ENCODE measurements at regions of chr10 and their contacts with region 1.

Region 1: GRCh38 chr10:58952747-58953466 is 223.5 kb upstream of the PHYHIPL start:
- DNase-seq: no peak
- H3K4me3 ChIP-seq: no peak overlapping the region
- CTCF ChIP-seq: peak; percentile 63

Region 2: DNA sequence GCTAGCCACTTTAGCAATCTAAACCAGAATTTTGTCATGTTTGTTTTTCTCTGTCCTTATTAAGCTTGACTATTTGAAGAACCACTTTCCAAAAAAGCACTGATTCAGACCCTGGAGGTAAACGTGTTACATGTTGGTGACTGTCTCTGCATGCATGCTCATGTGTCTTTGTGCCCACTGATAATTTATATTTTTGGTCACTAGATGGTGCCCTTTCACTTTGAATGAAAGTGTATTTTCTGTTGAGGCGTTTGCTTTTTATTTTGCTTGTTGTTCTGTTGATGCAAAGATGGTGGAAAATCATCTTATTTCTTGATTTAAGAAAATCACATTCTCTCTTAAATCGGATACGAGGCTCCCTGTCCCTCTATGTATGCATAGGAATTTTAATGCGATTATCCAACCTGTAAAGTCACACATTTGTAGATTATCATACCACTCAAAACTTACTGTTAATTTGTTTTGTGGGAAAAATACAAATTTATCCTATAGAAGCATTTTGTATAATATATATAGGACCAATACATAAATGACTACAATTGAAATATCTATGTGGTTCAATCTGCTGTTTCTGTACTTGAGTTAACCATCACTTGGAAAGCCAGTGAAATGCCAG is 170.9 kb before region 1 on chr10:
- CTCF ChIA-PET with region 1: interaction called, 26 read pairs
- POLR2A ChIA-PET with region 1: no interaction called
- DNase-seq: no peak
- H3K4me3 ChIP-seq: no peak overlapping the region
- CTCF ChIP-seq: no peak

Region 3: DNA sequence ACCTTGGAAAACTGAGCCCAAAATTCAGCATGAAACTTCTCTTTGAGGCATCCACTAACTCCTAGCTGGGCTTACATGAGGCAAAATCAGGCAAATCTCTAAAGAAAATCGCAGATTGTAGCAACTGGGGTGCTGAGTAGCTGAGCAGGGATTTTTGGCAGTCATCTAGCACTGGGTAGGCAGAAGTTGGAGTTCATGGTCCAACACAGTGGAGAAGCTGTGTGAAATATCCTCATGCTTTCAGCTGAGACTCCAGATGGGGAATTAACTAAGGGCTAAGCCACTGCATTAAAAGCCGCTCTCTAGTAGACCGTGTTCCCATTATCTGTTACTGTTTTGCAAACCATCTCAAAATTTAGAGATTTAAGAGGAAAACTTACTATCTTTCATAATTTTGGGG is 16.5 kb before region 1 on chr10:
- CTCF ChIA-PET with region 1: interaction called, 21 read pairs
- POLR2A ChIA-PET with region 1: no interaction called
- DNase-seq: no peak
- H3K4me3 ChIP-seq: no peak overlapping the region
- CTCF ChIP-seq: no peak

Region 4: DNA sequence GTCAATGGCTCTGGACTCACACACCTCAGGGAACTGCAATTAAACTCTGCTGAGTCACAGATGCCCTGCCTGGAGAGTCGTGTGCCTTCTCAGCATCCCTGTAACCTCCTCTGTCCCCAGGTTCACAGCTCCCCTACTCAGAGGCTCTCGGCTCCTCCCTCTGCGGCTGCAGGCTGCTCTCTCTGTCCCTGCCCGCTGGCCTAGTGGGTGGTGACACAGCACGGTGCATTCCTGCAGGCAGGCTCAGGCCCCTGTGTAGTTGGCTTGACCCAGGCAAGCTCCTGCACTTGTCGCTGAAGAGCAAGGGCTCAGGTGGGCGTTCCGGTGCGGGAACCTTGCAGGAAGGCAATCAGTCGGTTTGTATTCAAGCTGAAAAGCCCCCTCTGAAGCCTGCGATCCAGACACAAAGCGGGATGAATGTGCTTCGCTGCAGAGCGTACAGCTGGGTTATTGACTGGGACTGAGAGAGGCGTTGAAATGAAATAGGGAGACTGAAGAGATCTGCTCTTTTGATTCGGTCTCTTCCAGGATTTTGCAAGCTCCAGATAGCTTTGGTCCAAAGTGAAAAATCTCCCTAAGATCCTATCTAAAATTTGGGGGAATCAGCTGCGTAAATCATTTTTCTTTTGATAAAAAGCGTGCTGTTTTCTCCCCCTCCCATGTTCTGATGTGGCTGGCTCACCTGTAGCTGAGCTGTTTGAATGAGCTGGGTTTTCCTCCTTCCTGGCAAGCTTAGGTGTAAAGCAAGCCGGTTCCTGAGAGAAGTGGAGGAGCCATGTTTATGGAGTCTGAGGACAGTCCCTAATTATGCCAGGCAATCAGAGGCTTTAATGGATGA is 14.9 kb after region 1 on chr10:
- CTCF ChIA-PET with region 1: interaction called, 11 read pairs
- POLR2A ChIA-PET with region 1: no interaction called
- DNase-seq: no peak
- H3K4me3 ChIP-seq: no peak overlapping the region
- CTCF ChIP-seq: no peak

Region 5: GRCh38 chr10:59234816-59235429 is 282.0 kb after region 1 on chr10:
- CTCF ChIA-PET with region 1: interaction called, 14 read pairs
- POLR2A ChIA-PET with region 1: no interaction called
- DNase-seq: no peak
- H3K4me3 ChIP-seq: no peak overlapping the region
- CTCF ChIP-seq: peak; percentile 58